Activated CD4-positive, alpha-beta T cell treated with anti-CD3 and anti-CD28 coated beads for 36 hours (primary cell): ENCODE measurements at regions of chr1 and their contacts with region 1.

Region 1: GRCh38 chr1:92623187-92623778 is 136.6 kb upstream of the GFI1 start:
- DNase-seq: no peak
- ATAC-seq: peak; percentile 57
- H3K4me3 Mint-ChIP-seq: no peak overlapping the region
- H3K27ac Mint-ChIP-seq: no peak overlapping the region
- H3K4me1 Mint-ChIP-seq: peaks cover 14% of the 10 kb centered on the region
- H3K27me3 Mint-ChIP-seq: no peaks in the 10 kb centered on the region

Region 2: GRCh38 chr1:92080128-92080985 is 542.9 kb before region 1 on chr1 and contains the start of gene BTBD8:
- CTCF ChIA-PET with region 1: interaction called, 3 read pairs
- POLR2A ChIA-PET with region 1: no interaction called
- intact Hi-C with region 1: loop called in 1 of 2 experiments (anchors 2 kb)
- DNase-seq: peak; percentile 90
- ATAC-seq: peak; percentile 96
- H3K4me3 Mint-ChIP-seq: peak within 1 kb of the TSS; percentile 84
- H3K27ac Mint-ChIP-seq: peak within 1 kb of the TSS; percentile 94
- H3K4me1 Mint-ChIP-seq: peaks cover 15% of the 10 kb centered on the region
- H3K27me3 Mint-ChIP-seq: no peaks in the 10 kb centered on the region
- total RNA-seq, gene BTBD8: 1.8 to 2.4 TPM

Region 3: GRCh38 chr1:92367496-92367895 is 255.8 kb before region 1 on chr1:
- CTCF ChIA-PET with region 1: interaction called, 3 read pairs
- POLR2A ChIA-PET with region 1: no interaction called
- intact Hi-C with region 1: loop called in 1 of 2 experiments (anchors 5 kb)
- DNase-seq: no peak
- ATAC-seq: peak; percentile 55
- H3K4me3 Mint-ChIP-seq: no peak overlapping the region
- H3K27ac Mint-ChIP-seq: no peak overlapping the region
- H3K4me1 Mint-ChIP-seq: peaks cover 42% of the 10 kb centered on the region
- H3K27me3 Mint-ChIP-seq: no peaks in the 10 kb centered on the region